ENCODE measurements at regions of chr20 and their contacts with region 1.

Region 1: GRCh38 chr20:43666376-43667328 is at the start of gene MYBL2:
- DNase-seq: peak; percentile 87
- total RNA-seq, gene MYBL2: 0.24 to 0.60 TPM

Region 2: DNA sequence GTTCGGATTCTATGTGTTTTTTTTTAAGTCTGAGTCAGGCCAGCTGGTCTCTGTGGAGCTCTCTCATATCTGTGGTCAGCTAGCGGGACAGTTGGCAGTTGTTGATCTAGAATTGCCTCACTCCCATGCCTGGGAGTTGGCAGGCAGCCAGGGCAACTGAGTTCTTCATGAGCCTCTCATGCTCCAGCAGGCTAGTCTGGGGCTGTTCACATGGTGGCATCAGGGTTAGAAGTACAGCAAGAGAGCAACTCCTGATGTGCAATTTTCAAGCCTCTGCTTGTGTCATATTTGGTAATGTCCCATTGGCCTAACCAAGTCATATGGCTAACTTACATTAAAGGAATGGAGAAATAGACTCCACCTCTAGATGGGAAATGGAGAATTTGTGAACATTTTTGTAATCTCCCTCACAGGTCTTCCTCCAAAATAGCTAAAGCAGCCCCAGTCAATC is 82.6 kb before region 1 on chr20:
- intact Hi-C with region 1: no loop called
- DNase-seq: peak; percentile 92

Region 3: GRCh38 chr20:43717616-43717995 is 51.0 kb after region 1 on chr20:
- intact Hi-C with region 1: loop called in 1 of 2 experiments (anchors 5 kb)
- DNase-seq: peak; percentile 54

Region 4: GRCh38 chr20:43744151-43744611 is 77.5 kb after region 1 on chr20:
- intact Hi-C with region 1: no loop called
- DNase-seq: no peak

Measured in posterior vena cava (tissue), 2 donors.